Caco-2 (cell line): ENCODE measurements at regions of chr5 and their contacts with region 1.

Region 1: DNA sequence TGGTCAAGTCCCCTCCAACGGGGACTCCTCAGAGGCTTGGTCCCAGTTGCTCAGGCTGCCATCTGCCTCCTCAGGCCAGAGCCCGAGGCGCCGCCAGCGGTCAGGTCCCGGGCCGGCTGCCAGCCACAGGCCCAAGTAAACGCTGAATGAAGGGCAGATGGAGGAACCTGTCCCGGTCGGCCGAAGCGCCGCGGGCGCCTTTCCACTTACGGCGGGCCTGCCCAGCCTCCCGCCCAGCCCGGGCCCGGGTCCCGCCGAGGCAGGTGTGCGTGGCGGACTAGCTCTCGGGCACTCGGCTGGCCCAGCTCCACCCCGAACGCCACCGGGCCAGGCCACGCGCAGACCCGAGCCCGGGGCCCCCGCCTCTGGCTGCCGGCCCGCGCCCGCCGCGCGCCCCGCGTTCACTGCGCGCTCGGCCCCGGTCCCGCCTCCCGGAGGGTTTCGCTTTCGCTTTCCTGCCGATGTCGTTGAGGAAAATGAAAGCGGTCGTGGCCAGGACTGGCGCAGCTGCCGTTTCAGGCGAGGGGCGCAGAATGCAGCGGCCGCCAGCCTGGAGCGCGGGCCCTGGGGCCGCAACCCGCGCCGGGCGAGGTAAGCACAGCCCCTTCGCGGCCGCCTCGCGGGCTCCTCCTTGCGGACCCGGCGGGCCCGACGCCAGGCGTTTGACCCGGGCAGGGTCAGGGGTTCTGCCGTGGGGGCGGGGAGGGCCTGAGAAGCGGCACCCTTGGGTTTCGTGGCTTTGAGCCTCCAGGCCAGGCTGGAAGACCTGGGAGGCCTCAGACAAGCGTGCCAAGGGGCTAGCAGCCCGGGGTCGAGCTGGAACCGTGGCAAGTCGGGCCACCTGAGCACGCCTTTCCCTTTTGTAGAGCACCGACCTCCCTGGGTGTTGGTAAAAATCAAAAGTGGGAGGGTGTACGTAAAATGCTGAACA is 41.2 kb downstream of the SLC22A5 start:
- DNase-seq: peak; percentile 87 to 94
- H3K4me3 ChIP-seq: peak overlapping the region; percentile 72
- H3K4me3 Mint-ChIP-seq: peak overlapping the region; percentile 78
- H3K27ac Mint-ChIP-seq: peak overlapping the region; percentile 82
- H3K4me1 ChIP-seq: peaks cover 32% of the 10 kb centered on the region
- H3K4me1 Mint-ChIP-seq: peaks cover 23% of the 10 kb centered on the region
- H3K27me3 ChIP-seq: no peaks in the 10 kb centered on the region
- H3K27me3 Mint-ChIP-seq: no peaks in the 10 kb centered on the region
- CTCF ChIP-seq: peak; percentile 85 to 87

Region 2: DNA sequence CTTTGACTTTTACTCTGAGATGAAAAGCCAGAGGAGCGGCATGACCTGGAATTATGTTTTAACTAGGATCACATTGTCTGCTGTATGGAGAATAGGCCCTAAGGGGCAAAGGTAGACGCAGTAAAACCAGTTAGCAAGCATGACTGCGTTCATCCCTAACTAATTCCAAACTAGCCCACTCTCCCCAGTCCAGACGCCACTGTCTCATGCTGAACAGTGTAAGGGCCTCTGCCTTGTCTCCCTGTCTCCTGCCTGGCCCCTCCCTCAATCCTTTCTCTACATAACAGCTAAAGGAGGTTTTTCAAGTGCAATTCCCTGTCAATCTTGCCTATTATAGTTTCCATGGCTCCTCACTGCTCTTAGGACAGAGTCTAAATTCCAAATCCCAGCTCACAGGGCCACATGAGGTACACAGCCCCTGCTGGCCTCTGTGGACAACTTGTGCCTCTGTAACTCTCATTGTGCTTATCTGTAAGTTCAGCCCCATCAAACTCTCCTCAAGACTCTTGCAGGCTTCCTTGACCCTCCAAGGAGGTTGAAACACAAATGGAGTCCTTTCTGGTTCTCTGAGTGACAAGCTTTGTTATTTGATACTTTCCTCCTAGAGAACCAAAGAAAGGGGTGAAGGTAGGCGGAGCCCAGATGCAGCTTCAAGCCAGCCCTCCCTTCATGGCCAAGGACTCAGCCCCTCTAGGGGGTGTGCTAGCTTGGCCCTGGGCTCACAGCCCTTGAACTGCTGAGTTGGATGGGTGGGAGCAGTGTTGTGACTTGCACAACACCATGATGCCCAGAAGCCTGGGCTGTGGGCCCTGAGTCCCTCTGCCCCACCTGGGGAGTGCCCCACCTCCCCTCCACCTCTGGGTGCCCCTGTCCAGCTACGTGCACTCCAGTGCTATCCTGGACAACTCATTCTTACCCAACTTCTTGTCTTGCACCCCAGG is 132.5 kb before region 1 on chr5:
- CTCF ChIA-PET with region 1: interaction called, 3 read pairs
- POLR2A ChIA-PET with region 1: interaction called, 5 read pairs
- intact Hi-C with region 1: loop called (anchors 2 kb)
- DNase-seq: peak; percentile 82 to 91
- H3K4me3 ChIP-seq: no peak overlapping the region
- H3K4me3 Mint-ChIP-seq: peak overlapping the region; percentile 13
- H3K27ac Mint-ChIP-seq: peak overlapping the region; percentile 45
- H3K4me1 ChIP-seq: peaks cover 46% of the 10 kb centered on the region
- H3K4me1 Mint-ChIP-seq: peaks cover 50% of the 10 kb centered on the region
- H3K27me3 ChIP-seq: no peaks in the 10 kb centered on the region
- H3K27me3 Mint-ChIP-seq: no peaks in the 10 kb centered on the region
- CTCF ChIP-seq: peak; percentile 13 to 37

Region 3: DNA sequence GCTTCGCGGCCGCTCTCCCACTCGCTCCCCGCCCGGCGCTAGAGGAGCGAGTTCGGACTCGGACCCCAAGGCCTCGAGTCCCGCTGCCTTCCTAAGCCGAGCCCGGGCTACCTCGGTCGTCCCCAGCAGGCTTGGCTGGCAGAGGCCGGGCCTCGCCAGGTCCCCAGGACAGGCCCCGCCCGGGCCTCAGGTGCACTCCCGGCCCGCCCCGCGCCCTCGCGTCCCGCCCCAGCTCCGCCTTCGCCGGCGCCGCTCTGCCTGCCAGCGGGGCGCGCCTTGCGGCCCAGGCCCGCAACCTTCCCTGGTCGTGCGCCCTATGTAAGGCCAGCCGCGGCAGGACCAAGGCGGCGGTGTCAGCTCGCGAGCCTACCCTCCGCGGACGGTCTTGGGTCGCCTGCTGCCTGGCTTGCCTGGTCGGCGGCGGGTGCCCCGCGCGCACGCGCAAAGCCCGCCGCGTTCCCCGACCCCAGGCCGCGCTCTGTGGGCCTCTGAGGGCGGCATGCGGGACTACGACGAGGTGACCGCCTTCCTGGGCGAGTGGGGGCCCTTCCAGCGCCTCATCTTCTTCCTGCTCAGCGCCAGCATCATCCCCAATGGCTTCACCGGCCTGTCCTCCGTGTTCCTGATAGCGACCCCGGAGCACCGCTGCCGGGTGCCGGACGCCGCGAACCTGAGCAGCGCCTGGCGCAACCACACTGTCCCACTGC is 41.1 kb before region 1 on chr5 and contains the start of gene SLC22A5:
- CTCF ChIA-PET with region 1: interaction called, 3 read pairs
- POLR2A ChIA-PET with region 1: no interaction called
- intact Hi-C with region 1: loop called (anchors 1 kb)
- DNase-seq: peak; percentile 86 to 90
- H3K4me3 ChIP-seq: peak within 1 kb of the TSS; percentile 79
- H3K4me3 Mint-ChIP-seq: peak within 1 kb of the TSS; percentile 79
- H3K27ac Mint-ChIP-seq: peak within 1 kb of the TSS; percentile 85
- H3K4me1 ChIP-seq: peaks cover 44% of the 10 kb centered on the region
- H3K4me1 Mint-ChIP-seq: peaks cover 21% of the 10 kb centered on the region
- H3K27me3 ChIP-seq: no peaks in the 10 kb centered on the region
- H3K27me3 Mint-ChIP-seq: no peaks in the 10 kb centered on the region
- CTCF ChIP-seq: no peak
- total RNA-seq, gene SLC22A5: 19.1 and 20.2 TPM in 2 replicates

Region 4: GRCh38 chr5:132386644-132387286 is 24.0 kb before region 1 on chr5:
- CTCF ChIA-PET with region 1: interaction called, 3 read pairs
- POLR2A ChIA-PET with region 1: no interaction called
- intact Hi-C with region 1: loop called (anchors 1 kb)
- DNase-seq: peak; percentile 65
- H3K4me3 ChIP-seq: no peak overlapping the region
- H3K4me3 Mint-ChIP-seq: no peak overlapping the region
- H3K27ac Mint-ChIP-seq: no peak overlapping the region
- H3K4me1 ChIP-seq: peaks cover 29% of the 10 kb centered on the region
- H3K4me1 Mint-ChIP-seq: no peaks in the 10 kb centered on the region
- H3K27me3 ChIP-seq: no peaks in the 10 kb centered on the region
- H3K27me3 Mint-ChIP-seq: no peaks in the 10 kb centered on the region
- CTCF ChIP-seq: peak; percentile 69 to 73